ENCODE measurements at regions of chr4 and their contacts with region 1.

Region 1: GRCh38 chr4:139229534-139230039 is 50.4 kb downstream of the MGARP start:
- DNase-seq: no peak
- ATAC-seq: peak; percentile 66
- H3K4me3 Mint-ChIP-seq: no peak overlapping the region
- H3K27ac Mint-ChIP-seq: no peak overlapping the region
- H3K4me1 Mint-ChIP-seq: peaks cover 1% of the 10 kb centered on the region
- H3K27me3 Mint-ChIP-seq: no peaks in the 10 kb centered on the region

Region 2: GRCh38 chr4:139099366-139099982 is 130.1 kb before region 1 on chr4:
- CTCF ChIA-PET with region 1: interaction called, 6 read pairs
- POLR2A ChIA-PET with region 1: interaction called, 3 read pairs
- intact Hi-C with region 1: loop called (anchors 1 kb)
- DNase-seq: peak; percentile 84
- ATAC-seq: peak; percentile 66
- H3K4me3 Mint-ChIP-seq: no peak overlapping the region
- H3K27ac Mint-ChIP-seq: no peak overlapping the region
- H3K4me1 Mint-ChIP-seq: peaks cover 2% of the 10 kb centered on the region
- H3K27me3 Mint-ChIP-seq: no peaks in the 10 kb centered on the region

Region 3: DNA sequence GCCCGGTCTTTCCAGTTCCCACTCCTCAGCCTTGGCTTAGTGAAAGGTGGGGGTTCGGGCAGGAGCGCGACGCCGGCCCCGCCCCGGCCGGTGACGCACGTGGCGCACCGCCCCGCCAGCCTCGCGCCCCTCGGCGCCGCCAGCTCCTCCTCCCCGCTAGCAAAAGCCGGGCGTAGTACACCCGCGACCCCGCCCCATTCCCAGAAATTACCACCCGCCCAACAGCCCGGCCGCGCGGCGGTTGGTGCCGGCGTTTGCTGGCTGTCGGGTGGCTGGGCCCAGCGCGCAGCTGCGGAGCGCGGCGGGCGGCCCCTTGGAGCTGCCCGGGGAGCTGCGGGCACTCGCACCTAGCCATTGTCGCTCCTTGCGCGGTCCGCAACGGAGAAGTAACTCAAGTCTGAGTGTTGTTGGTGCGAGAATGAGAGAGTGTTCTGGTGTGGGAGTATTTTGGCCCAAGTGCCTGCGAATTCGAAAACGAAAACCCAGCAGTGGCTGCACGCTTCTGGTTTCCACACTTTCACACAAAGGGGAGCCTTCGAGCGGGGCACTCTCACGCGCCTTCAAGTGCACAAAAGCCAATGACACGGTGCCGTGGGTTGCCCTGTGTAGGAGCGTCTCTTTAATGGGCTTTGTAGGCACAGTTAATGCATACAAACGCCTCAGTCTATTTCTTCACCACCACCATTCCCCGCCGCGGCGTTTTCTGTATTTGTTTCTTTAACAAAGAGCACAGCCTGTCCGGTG is 51.5 kb before region 1 on chr4:
- CTCF ChIA-PET with region 1: no interaction called
- POLR2A ChIA-PET with region 1: no interaction called
- intact Hi-C with region 1: no loop called
- DNase-seq: peak; percentile 95
- ATAC-seq: peak; percentile 77
- H3K4me3 Mint-ChIP-seq: peak overlapping the region; percentile 81
- H3K27ac Mint-ChIP-seq: peak overlapping the region; percentile 72
- H3K4me1 Mint-ChIP-seq: peaks cover 12% of the 10 kb centered on the region
- H3K27me3 Mint-ChIP-seq: peaks cover 12% of the 10 kb centered on the region

Region 4: DNA sequence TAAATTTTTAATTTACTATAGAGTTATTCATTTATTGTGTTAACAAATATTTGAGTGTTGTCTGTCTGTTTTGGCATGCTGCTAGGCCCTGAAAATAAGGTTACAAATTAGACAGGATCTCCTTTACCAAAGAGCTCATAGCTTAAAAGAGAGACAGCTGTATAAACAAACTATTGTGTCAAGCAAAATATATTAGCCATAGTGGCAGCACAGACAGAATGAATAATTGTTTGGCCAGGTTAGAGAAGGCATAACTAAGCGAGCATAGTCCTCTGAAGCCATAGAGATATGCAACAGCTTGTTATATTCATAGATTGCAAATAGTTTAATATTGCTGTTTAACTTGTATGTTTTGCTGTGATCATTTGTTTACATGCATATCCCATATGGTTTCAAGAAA is 139.4 kb after region 1 on chr4:
- CTCF ChIA-PET with region 1: no interaction called
- POLR2A ChIA-PET with region 1: no interaction called
- intact Hi-C with region 1: no loop called
- DNase-seq: no peak
- ATAC-seq: no peak
- H3K4me3 Mint-ChIP-seq: no peak overlapping the region
- H3K27ac Mint-ChIP-seq: no peak overlapping the region
- H3K4me1 Mint-ChIP-seq: peaks cover 3% of the 10 kb centered on the region
- H3K27me3 Mint-ChIP-seq: no peaks in the 10 kb centered on the region